Dendritic cell treated with granulocyte-macrophage colony-stimulating factor and Interleukin-4, amounts not matched to agents 40 ng/mL and 50 ng/mL, for 4 days (primary cell): ENCODE measurements at regions of chrX and their contacts with region 1.

Region 1: DNA sequence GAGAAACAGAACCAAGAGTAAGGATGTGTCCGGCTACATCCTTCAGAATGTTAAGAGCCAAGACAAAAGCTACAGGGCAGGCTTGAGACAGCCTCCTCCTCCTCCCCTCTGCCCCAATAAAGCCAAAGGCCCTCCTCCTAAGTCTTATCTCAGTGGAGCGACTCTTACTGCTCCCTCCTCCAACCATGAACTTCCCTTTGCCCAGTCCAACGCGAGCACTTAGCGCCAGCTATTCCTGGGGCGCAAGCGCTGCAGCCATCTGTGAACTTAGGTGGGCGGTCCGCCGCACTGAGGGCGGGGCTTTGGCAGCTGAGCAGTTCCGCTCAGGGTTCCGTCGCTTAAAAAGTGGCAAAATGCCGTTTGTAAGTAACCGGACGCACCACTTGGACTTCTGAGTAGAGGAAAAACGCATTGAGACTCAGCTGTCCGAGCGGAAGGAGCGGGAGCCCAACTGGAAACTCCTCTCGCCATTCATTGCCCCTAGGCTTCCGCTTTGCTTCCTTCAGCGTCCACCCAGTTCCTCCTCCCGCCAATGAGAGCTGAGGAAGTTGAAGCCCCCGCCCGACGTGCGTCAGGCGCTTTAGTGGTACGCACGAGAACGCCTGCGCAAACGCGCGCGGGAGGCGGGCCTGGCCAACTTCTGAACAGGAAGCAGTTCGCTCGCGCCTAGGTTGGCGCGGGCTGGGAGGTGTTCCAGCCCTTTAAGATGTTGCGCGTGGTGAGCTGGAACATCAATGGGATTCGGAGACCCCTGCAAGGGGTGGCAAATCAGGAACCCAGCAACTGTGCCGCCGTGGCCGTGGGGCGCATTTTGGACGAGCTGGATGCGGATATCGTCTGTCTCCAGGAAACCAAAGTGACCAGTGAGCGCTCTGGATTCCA is at the start of gene APEX2:
- H3K4me3 Mint-ChIP-seq: peak within 1 kb of the TSS; percentile 98
- H3K27ac Mint-ChIP-seq: peak within 1 kb of the TSS; percentile 97
- H3K4me1 Mint-ChIP-seq: peaks cover 45% of the 10 kb centered on the region
- H3K27me3 Mint-ChIP-seq: no peaks in the 10 kb centered on the region

Region 2: GRCh38 chrX:53683556-53684414 is 1316.2 kb before region 1 on chrX:
- intact Hi-C with region 1: loop called (anchors 10 kb)
- H3K4me3 Mint-ChIP-seq: peak overlapping the region; percentile 80
- H3K27ac Mint-ChIP-seq: peak overlapping the region; percentile 95
- H3K4me1 Mint-ChIP-seq: peaks cover 11% of the 10 kb centered on the region
- H3K27me3 Mint-ChIP-seq: no peaks in the 10 kb centered on the region

Region 3: DNA sequence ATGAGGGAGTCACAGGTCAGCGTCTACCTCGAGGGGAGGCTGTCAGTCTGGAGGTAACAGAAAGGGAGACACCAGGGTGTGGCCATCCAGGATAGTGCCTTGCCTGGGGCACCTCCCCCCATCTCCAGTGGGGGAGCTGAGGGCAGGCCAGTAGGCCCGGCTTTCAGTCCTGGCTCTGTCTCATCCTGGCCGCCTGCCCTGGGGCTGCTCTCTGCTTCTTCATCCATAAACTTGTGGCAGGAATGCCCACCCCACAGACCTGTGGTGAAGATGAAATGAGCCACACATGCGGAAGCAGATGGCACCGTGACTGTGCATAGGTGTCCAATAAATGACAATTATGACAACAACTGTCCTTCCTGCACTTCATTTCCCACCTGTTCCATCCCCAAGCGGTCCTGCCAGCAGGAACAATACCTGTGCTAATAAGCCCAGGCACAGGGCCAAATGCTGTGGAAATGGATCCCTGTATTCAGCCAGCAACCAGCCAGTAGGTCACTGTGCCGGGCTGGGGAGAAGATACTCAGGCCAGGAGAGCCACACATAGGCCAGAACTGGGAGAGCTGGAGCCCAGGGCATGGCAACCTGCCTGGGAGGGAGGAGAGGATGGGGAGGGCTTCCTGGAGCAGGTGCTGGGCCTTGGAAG is 49.1 kb before region 1 on chrX:
- intact Hi-C with region 1: no loop called
- H3K4me3 Mint-ChIP-seq: no peak overlapping the region
- H3K27ac Mint-ChIP-seq: no peak overlapping the region
- H3K4me1 Mint-ChIP-seq: no peaks in the 10 kb centered on the region
- H3K27me3 Mint-ChIP-seq: peaks cover 5% of the 10 kb centered on the region

Region 4: DNA sequence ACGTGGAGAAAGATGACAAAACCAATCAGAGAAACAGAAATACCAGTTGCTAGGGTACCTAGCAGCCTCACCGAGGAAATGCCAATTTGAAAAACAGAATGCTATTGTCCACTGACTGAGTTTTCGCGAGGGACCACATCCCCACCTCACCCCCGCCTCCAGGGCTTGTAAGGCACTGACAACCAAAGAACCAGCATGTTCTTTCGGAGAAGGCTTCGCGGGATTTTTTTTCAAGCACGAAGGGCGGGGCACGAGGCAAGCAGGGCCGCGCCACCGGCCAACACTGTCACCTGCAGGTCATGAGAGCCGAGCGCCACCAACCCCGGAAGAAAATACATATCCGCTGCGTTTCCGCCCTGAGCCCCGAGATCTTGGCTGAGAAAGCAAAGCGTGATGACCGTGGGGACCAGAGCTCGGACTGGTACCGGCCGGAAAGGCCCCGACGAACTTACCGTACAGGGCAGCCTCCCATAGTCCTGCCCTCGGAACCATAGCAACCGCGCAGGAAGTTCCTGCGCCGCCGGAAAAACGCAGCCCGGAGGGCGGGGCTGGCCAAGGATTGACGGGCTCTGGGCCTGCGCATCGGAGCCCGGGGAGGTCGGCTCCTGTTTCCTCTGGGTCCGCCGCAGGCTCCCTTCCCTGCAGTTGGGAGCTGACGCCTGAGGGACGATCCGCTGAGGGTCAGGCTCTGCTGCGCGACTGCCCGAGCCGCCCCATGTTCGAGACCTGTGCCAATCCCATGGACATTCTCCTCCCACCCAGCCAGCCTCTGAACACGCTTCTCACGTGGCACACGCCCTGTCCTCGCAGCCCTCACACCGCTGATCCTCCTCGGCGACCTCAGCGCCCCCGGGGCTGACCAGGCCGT is 161.0 kb after region 1 on chrX:
- intact Hi-C with region 1: no loop called
- H3K4me3 Mint-ChIP-seq: peak overlapping the region; percentile 86
- H3K27ac Mint-ChIP-seq: peak overlapping the region; percentile 87
- H3K4me1 Mint-ChIP-seq: peaks cover 10% of the 10 kb centered on the region
- H3K27me3 Mint-ChIP-seq: peaks cover 12% of the 10 kb centered on the region